HEK293 (cell line): ENCODE measurements at regions of chr19 and their contacts with region 1.

Region 1: DNA sequence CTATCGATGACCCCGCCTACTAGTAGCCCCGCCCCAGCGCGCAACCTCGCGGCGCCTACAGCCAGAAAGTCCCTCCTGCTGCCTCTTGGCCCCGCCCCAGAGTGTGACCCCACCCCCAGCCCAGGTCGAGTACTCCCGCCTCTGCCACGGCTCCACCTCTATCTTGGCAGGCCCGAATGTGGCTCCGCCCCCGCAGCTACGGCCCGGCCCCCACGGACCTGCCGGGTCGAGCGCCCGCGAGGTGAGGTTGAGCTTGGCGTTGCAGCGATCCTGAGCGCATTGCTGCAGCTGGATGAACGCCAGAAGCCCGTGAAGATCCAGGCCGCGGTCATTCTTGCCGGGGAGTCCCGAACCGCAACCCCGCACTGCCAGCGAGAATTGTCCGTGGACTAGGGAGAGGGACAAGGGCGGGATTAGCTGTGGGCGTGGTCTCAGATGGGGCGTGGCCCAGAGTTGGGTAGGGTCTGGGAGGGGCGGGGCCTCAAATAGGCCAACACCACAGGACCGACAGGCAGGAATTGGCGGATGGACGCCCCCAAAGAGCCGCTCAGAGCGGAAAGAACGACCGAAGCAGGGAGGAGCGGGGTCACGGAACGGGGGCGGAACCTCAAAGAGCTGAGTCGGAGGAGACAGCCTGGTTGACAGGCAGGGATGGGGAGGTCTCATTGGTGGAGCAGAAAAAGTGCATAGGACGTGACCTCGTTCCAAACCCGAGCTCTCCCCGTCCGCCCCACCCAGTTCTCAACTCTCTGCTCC is 1.8 kb downstream of the LYPD3 start:
- H3K4me3 ChIP-seq: peak overlapping the region; percentile 64
- H3K27ac ChIP-seq: peak overlapping the region; percentile 48; the same call in 1 of the 2 replicates
- H3K4me1 ChIP-seq: peaks cover 13% of the 10 kb centered on the region; the same call in 1 of the 2 replicates
- CTCF ChIP-seq: no peak

Region 2: DNA sequence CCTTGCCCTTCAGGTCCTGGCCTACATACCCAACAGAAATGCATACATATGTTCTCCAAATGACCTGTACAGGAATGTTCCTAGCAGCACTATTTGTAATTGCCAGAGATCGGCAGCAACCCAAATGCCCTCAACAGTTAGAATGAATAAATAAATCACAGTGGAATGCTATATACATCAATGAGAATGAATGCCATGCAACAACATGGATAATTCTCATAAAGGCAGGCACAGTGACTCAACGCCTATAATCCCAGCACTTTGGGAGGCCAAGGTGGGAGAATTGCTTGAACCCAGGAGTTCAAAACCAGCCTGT is 30.2 kb before region 1 on chr19:
- CTCF ChIA-PET with region 1: interaction called, 13 read pairs
- POLR2A ChIA-PET with region 1: interaction called, 3 read pairs
- H3K4me3 ChIP-seq: no peak overlapping the region
- H3K27ac ChIP-seq: no peak overlapping the region
- H3K4me1 ChIP-seq: peaks cover 2% of the 10 kb centered on the region
- CTCF ChIP-seq: no peak

Region 3: DNA sequence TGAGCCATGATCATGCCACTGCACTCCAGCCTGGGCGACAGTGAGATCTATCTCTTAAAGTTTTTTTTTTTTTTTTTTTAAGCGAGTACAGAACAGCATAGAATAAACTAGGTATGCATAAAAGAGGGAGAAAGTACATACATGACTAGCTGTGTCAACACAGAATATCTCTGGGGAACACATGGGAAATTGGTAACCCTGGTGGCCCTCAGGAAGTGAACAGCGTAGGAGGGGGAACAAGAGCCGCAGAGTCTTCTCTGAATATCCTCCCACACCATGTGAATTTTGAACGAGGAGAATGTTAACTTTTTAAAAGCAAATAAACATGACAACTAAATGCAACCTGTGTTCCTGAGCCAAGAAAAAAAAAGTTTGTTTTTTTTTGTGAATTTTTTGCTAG is 25.8 kb after region 1 on chr19:
- CTCF ChIA-PET with region 1: interaction called, 3 read pairs
- POLR2A ChIA-PET with region 1: interaction called, 11 read pairs
- H3K4me3 ChIP-seq: no peak overlapping the region
- H3K27ac ChIP-seq: no peak overlapping the region
- H3K4me1 ChIP-seq: no peaks in the 10 kb centered on the region
- CTCF ChIP-seq: no peak

Region 4: GRCh38 chr19:43510713-43511112 is 47.2 kb after region 1 on chr19:
- CTCF ChIA-PET with region 1: interaction called, 3 read pairs
- POLR2A ChIA-PET with region 1: interaction called, 14 read pairs
- H3K4me3 ChIP-seq: no peak overlapping the region
- H3K27ac ChIP-seq: no peak overlapping the region
- H3K4me1 ChIP-seq: no peaks in the 10 kb centered on the region
- CTCF ChIP-seq: no peak

Region 5: DNA sequence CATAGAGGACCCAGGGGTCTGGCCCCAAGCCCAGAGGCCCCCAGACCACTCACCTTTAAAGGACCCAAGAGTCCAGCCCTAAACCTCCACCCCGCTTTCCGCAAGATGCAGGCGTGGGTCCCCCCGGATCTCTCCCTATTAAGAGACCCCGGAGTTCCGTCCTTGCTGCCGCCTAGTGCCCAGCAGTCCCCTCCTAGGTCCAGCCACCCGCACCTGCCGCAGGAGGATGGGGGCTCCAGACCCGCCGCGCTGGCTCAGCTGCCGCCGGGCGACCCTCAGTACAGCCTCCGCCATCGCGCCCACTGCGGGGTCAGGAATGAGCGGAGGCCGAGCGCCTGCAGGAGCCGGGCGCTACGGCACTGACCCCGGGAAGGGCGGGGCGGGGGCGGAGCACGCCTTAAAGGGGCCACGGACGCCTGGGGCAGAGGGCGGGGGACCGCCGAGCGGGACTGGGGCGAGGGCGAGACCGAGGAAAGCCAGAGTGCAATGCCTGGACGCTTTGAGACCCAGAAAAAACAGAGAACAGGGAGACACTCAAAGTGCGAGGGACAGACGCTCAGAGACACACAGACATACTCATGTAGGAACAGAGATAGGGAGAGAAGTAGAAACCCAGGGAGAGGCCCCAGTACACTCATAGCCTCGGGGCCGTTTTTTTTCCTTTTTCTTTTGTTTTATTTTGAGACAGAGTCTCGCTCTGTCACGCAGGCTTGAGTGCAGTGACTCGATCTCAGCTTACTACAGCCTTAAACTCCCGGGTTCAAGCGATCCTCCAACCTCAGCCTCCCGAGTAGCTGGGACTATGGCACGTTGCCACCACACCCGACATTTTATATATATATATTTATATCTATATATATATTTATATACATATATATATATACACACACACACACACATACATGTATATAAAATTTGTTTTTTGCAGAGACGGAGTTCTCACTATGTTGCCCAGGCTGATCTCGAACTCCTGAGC is 63.6 kb after region 1 on chr19 and contains the start of gene ETHE1:
- CTCF ChIA-PET with region 1: interaction called, 3 read pairs
- POLR2A ChIA-PET with region 1: interaction called, 10 read pairs
- H3K4me3 ChIP-seq: peak within 1 kb of the TSS; percentile 60
- H3K27ac ChIP-seq: peak within 1 kb of the TSS; percentile 64; the same call in 1 of the 2 replicates
- H3K4me1 ChIP-seq: peaks cover 30% of the 10 kb centered on the region
- CTCF ChIP-seq: peak; percentile 79

Region 6: GRCh38 chr19:43798546-43799409 is 335.2 kb after region 1 on chr19:
- CTCF ChIA-PET with region 1: no interaction called
- POLR2A ChIA-PET with region 1: no interaction called
- H3K4me3 ChIP-seq: peak overlapping the region; percentile 15
- H3K27ac ChIP-seq: no peak overlapping the region
- H3K4me1 ChIP-seq: peaks cover 8% of the 10 kb centered on the region; the same call in 1 of the 2 replicates
- CTCF ChIP-seq: no peak